ENCODE measurements at regions of chr12 and their contacts with region 1.

Region 1: DNA sequence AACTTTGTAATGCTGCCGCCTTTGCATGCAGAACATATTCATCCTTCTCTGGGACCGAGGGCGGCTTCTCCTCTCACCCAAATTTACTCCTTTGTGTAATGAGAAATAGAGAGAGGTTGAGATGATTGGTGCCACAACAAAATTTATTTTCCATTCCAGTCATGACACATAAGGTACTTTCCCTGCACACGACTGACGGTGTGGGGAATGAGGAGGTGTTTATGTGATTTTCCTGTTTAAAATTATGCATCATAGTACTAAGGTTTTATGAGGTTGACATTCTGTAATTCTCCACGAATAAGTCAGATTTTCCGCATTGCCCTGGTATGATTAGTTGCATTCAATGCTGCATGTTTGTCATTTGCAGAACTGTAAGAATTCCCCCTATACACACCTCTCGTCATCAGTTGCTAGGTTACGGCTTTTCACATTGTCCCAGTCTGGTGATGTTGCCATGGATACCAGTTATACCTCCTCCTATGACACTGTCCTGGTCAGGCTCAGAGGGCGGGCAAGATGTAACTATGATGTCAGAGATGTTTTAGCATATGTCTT is 23.1 kb downstream of the BICDL1 start:
- DNase-seq: peak; percentile 37 to 90 (median 70)
- ATAC-seq: peak; percentile 48 to 60
- H3K4me3 Mint-ChIP-seq: peak overlapping the region; percentile 50 to 77 (median 68)
- H3K27ac Mint-ChIP-seq: peak overlapping the region; percentile 92 to 99 (median 96)
- H3K4me1 Mint-ChIP-seq: peaks cover 34 to 89% (median 81%) of the 10 kb centered on the region in 4 donors
- H3K27me3 Mint-ChIP-seq: no peaks in the 10 kb centered on the region

Region 2: DNA sequence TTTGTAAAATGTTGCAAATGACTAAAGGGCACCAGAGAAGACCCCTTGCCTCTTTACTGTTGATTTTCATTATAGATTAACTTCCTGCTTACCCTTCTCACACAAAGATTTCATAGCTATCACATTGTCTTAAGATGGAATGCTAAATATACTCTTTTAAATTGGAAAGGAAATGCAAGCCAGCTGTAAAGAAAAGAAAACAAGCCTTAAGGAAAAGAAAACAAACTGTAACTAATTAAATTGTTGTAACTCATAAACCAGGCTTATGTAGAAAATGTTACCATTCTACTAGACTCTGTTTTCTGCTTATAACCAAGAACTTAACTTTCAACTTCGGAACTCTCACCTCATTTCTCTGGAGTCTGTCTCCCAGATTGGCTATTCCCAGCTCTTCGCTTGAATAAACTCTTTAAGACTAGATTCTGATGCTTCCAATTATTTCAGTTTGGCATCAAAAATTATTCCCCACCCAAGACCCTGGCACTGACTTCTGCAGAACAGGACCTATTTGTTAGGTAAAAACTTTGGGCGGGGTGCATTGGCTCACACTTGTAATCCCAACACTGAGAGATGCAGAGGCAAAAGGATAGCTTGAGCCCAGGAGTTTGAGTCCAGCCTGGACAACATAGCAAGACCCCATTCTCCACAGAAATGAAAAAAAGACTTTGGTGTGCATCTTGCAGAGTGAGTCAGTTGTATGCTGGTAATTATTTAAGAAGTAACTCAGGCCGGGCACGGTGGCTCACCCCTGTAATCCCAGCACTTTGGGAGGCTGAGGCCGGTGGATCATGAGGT is 98.4 kb before region 1 on chr12:
- POLR2A ChIA-PET with region 1: no interaction called
- DNase-seq: no peak
- ATAC-seq: no peak
- H3K4me3 Mint-ChIP-seq: no peak overlapping the region
- H3K27ac Mint-ChIP-seq: no peak overlapping the region
- H3K4me1 Mint-ChIP-seq: no peaks in the 10 kb centered on the region
- H3K27me3 Mint-ChIP-seq: peaks cover 0 to 11% (median 0%) of the 10 kb centered on the region in 5 donors

Region 3: DNA sequence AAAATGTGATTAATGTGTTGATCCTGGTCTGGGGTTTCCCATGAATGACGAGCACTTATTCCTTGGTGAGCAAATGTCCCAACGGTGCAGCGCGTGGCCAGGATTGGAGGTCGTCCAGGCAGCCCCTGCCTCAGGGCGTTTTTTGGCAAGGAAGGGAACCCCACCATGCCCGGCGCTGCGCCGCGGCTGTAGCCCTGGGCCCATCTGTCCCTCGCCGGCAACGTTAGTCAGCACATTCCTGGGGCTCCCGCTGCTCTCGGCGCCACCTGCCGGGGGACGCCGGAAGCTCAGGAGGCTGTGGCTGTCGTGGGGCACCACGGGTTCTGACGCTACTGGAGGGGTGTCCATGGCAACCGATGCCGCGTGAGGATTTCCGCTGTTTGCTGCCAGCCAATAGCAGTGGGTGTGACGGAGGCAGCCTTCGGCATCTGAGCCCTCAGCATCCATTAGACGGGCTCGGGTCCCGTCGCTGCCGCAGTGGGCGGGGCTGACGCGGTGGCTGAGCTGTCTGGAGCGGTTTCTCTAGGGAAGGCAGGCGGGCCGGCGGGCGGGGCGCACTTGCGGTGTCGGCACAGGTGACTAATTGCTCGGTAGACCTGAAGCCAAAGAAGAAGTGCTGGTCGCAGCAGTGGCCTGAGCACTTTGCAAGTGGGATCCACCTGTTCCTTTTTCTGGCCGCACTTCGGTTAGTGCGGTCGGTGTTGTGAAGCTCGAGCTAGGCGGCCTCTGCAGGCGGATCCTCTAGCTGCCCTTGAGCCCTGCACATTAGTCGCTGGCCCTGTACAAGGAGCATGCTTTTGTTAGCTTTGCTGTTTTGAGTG is 74.9 kb after region 1 on chr12:
- POLR2A ChIA-PET with region 1: interaction called, 12 read pairs
- DNase-seq: peak; percentile 98 to 100 (median 99)
- ATAC-seq: peak; percentile 97
- H3K4me3 Mint-ChIP-seq: peak overlapping the region; percentile 56 to 86 (median 79)
- H3K27ac Mint-ChIP-seq: peak overlapping the region; percentile 62 to 96 (median 87)
- H3K4me1 Mint-ChIP-seq: peaks cover 14 to 20% (median 16%) of the 10 kb centered on the region in 4 donors
- H3K27me3 Mint-ChIP-seq: peaks cover 0 to 1% (median 0%) of the 10 kb centered on the region in 5 donors